Activated CD4-positive, alpha-beta T cell treated with anti-CD3 and anti-CD28 coated beads, Interleukin-2, amount 10 ng/mL, durations not matched to agents 24 days and 14 days (primary cell): ENCODE measurements at regions of chr5 and their contacts with region 1.

Region 1: GRCh38 chr5:72366324-72366976 is 46.3 kb downstream of the PTCD2 start:
- DNase-seq: peak; percentile 79
- H3K4me3 Mint-ChIP-seq: no peak overlapping the region
- H3K27ac Mint-ChIP-seq: no peak overlapping the region
- H3K4me1 Mint-ChIP-seq: peaks cover 3% of the 10 kb centered on the region
- H3K27me3 Mint-ChIP-seq: no peaks in the 10 kb centered on the region

Region 2: DNA sequence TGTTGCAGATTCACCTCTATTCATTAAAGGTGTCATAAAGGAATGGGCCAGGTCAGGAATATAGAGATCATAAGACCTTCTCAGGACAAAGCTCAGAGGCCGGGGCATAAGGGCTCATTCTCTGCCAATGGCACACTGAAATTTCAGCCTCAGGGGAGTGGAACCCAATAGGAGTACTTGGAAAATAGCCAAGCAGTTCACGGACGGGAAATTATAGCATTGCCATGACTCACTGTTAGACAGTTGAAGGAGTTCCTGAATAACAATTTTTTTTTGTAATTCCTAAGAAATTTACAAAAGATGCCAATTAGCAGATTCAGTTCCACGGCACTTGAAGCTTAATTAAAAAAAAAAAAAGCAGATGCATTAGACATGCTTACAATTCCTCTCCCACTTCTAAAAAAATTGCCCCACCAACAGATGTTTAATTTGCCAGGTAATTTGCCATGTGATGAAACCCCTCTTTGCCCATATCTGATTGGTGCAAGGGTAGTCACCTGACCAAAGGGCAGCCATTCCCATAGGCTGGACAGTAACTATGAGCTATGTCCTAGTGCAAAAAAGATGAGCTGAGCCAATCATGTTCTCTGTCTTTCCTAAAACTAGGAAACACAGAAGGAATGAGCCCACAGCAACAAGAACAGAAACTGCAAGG is 12.3 kb after region 1 on chr5:
- intact Hi-C with region 1: no loop called
- DNase-seq: no peak
- H3K4me3 Mint-ChIP-seq: no peak overlapping the region
- H3K27ac Mint-ChIP-seq: no peak overlapping the region
- H3K4me1 Mint-ChIP-seq: no peaks in the 10 kb centered on the region
- H3K27me3 Mint-ChIP-seq: peaks cover 16% of the 10 kb centered on the region

Region 3: DNA sequence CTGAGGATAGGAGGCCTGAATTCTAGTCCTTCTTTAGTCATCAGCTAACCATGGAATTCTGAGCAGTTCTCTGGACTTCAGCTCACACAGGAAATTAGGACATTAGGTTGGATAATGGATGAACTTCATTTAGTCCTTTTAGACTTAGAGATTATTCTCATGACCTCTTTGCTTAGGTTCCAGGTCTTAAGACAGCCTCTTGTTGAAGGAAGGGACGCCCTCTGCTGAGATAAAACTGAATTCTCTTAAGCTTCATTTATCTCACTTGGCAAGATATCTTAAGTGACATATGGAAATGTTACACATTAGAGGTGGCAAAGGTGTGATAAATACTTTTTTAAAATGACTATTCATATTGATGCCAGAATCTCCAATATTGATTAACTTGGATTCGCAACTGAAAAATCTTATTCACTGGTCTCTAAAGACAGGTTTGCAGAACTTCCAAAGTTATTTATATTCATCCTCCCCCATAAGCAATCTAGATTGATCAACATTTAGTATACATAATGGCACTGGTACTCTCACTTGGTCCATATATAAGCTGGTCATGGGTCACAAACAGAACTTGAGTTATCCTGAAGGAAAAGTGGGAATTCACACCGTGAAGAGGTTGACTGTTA is 157.6 kb after region 1 on chr5:
- intact Hi-C with region 1: loop called (anchors 1 kb)
- DNase-seq: no peak
- H3K4me3 Mint-ChIP-seq: no peak overlapping the region
- H3K27ac Mint-ChIP-seq: no peak overlapping the region
- H3K4me1 Mint-ChIP-seq: no peaks in the 10 kb centered on the region
- H3K27me3 Mint-ChIP-seq: peaks cover 3% of the 10 kb centered on the region